Dorsolateral prefrontal cortex (tissue), 120 donors: ENCODE measurements at regions of chr5 and their contacts with region 1.

Region 1: GRCh38 chr5:56909294-56910209 is at the start of gene SETD9:
- DNase-seq: peak; percentile 95 to 98 (median 96)
- H3K4me3 ChIP-seq: peak within 1 kb of the TSS; percentile 54 to 92 (median 78)
- H3K27ac ChIP-seq: peak within 1 kb of the TSS; percentile 67 to 99 (median 97)
- H3K27me3 ChIP-seq: no peaks in the 10 kb centered on the region
- CTCF ChIP-seq: peak in 21 of 56 donors; percentile 4 to 40 (median 18)
- total RNA-seq, gene SETD9: 1.8 to 16.2 (median 5.6) TPM

Region 2: GRCh38 chr5:56215019-56215830 is 694.3 kb before region 1 on chr5:
- intact Hi-C with region 1: no loop called
- DNase-seq: no peak
- H3K4me3 ChIP-seq: no peak overlapping the region
- H3K27ac ChIP-seq: no peak overlapping the region
- H3K27me3 ChIP-seq: no peaks in the 10 kb centered on the region
- CTCF ChIP-seq: no peak

Region 3: GRCh38 chr5:56951946-56952691 is 42.6 kb after region 1 on chr5 and contains the start of gene MIER3:
- intact Hi-C with region 1: loop called (anchors 1 to 2 kb)
- DNase-seq: peak; percentile 53 to 88 (median 66)
- H3K4me3 ChIP-seq: peak within 1 kb of the TSS; percentile 65 to 98 (median 83)
- H3K27ac ChIP-seq: peak within 1 kb of the TSS; percentile 56 to 95 (median 86)
- H3K27me3 ChIP-seq: no peaks in the 10 kb centered on the region
- CTCF ChIP-seq: no peak
- total RNA-seq, gene MIER3: 13.7 to 33.5 (median 22.7) TPM

Region 4: GRCh38 chr5:57037355-57037754 is 127.8 kb after region 1 on chr5:
- intact Hi-C with region 1: loop called in 1 of 2 experiments (anchors 2 kb)
- DNase-seq: peak in 6 of 10 donors; percentile 9 to 54 (median 41)
- H3K4me3 ChIP-seq: peak overlapping the region in 1 of 59 donors; percentile 22
- H3K27ac ChIP-seq: peak overlapping the region in 8 of 59 donors; percentile 8 to 73 (median 24)
- H3K27me3 ChIP-seq: peaks cover 0 to 8% (median 0%) of the 10 kb centered on the region in 45 donors
- CTCF ChIP-seq: peak in 9 of 56 donors; percentile 6 to 39 (median 15)

Region 5: GRCh38 chr5:57199866-57200265 is 290.3 kb after region 1 on chr5:
- intact Hi-C with region 1: no loop called
- DNase-seq: no peak
- H3K4me3 ChIP-seq: no peak overlapping the region
- H3K27ac ChIP-seq: no peak overlapping the region
- H3K27me3 ChIP-seq: no peaks in the 10 kb centered on the region
- CTCF ChIP-seq: no peak